ENCODE measurements at regions of chr18 and their contacts with region 1.

Region 1: GRCh38 chr18:23586249-23587196 is at the start of gene NPC1:
- DNase-seq: peak; percentile 97 to 98
- ATAC-seq: peak; percentile 100
- H3K4me3 ChIP-seq: peak within 1 kb of the TSS; percentile 74 to 94
- H3K27ac ChIP-seq: peak within 1 kb of the TSS; percentile 93 to 95
- H3K4me1 ChIP-seq: peaks cover 0 to 6% of the 10 kb centered on the region in 2 donors
- H3K27me3 ChIP-seq: no peaks in the 10 kb centered on the region
- total RNA-seq, gene NPC1: 57.6 to 81.0 TPM

Region 2: GRCh38 chr18:23169657-23170044 is 416.9 kb before region 1 on chr18:
- intact Hi-C with region 1: no loop called
- DNase-seq: no peak
- ATAC-seq: no peak
- H3K4me3 ChIP-seq: no peak overlapping the region
- H3K27ac ChIP-seq: no peak overlapping the region
- H3K4me1 ChIP-seq: no peaks in the 10 kb centered on the region
- H3K27me3 ChIP-seq: no peaks in the 10 kb centered on the region

Region 3: GRCh38 chr18:23503038-23503962 is 83.2 kb before region 1 on chr18 and contains the start of gene RMC1:
- intact Hi-C with region 1: loop called in 1 of 2 experiments (anchors 5 kb)
- DNase-seq: peak; percentile 99
- ATAC-seq: peak; percentile 99
- H3K4me3 ChIP-seq: peak within 1 kb of the TSS; percentile 83 to 90
- H3K27ac ChIP-seq: peak within 1 kb of the TSS; percentile 52 to 99
- H3K4me1 ChIP-seq: no peaks in the 10 kb centered on the region
- H3K27me3 ChIP-seq: no peaks in the 10 kb centered on the region
- total RNA-seq, gene RMC1: 22.7 to 33.6 TPM

Region 4: DNA sequence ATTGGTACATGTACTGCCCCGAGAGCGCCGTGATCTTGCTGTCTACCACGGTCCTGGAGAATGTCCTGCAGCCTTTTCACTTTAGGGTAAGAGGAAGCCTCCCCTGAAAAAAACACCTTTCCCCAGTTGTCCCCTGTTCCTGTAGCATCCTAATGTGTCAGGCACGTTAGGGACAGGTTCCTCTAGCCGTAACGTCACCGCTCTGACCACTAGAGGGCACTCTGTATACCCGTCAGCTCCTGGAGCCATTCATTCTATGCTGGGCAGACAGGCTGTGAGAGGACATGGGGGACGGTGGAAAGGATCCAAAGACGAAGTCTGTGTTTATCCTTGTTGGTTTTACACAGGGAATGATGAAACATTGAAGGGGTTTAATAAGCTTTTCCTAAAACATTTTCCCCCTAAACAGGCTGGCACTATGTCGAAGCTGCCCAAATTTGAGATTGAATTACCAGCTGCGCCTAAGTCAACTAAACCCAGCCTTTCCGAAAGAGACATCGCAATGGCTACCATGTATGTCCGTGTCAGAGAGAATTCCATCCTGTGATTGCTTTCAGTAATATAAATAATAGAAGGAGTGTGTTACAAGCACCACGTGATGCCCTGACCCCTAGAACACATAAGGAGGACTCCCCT is 70.5 kb before region 1 on chr18:
- intact Hi-C with region 1: loop called (anchors 5 kb)
- DNase-seq: peak; percentile 83 to 84
- ATAC-seq: peak; percentile 94
- H3K4me3 ChIP-seq: no peak overlapping the region
- H3K27ac ChIP-seq: no peak overlapping the region
- H3K4me1 ChIP-seq: no peaks in the 10 kb centered on the region
- H3K27me3 ChIP-seq: no peaks in the 10 kb centered on the region

Region 5: DNA sequence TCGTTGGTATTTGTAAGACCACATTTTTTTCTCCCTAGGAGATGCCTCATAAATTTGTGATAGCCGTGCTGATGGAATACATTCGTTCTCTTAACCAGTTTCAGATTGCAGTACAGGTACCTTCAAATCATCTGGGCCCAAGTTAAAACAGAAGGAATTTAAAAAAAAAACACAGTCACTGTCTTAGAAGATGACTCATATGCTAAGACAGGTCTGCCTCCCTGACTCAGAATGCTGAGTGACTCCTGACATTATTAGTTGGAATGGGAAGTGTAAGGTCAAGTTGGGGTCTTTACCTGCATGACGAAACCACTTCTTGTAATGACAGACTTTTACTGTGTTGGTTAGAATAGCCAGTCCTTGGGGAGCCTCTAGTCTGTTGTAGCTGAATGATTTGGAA is 56.9 kb before region 1 on chr18:
- intact Hi-C with region 1: no loop called
- DNase-seq: no peak
- ATAC-seq: no peak
- H3K4me3 ChIP-seq: no peak overlapping the region
- H3K27ac ChIP-seq: no peak overlapping the region
- H3K4me1 ChIP-seq: no peaks in the 10 kb centered on the region
- H3K27me3 ChIP-seq: no peaks in the 10 kb centered on the region

Region 6: GRCh38 chr18:23719634-23720201 is 133.2 kb after region 1 on chr18:
- intact Hi-C with region 1: no loop called
- DNase-seq: peak in 1 of 2 donors; percentile 65
- ATAC-seq: peak; percentile 81
- H3K4me3 ChIP-seq: no peak overlapping the region
- H3K27ac ChIP-seq: no peak overlapping the region
- H3K4me1 ChIP-seq: no peaks in the 10 kb centered on the region
- H3K27me3 ChIP-seq: no peaks in the 10 kb centered on the region

Region 7: GRCh38 chr18:23900994-23901393 is 314.5 kb after region 1 on chr18:
- intact Hi-C with region 1: no loop called
- DNase-seq: no peak
- ATAC-seq: no peak
- H3K4me3 ChIP-seq: no peak overlapping the region
- H3K27ac ChIP-seq: no peak overlapping the region
- H3K4me1 ChIP-seq: no peaks in the 10 kb centered on the region
- H3K27me3 ChIP-seq: peaks cover 0 to 2% of the 10 kb centered on the region in 2 donors